ENCODE measurements at regions of chr14 and their contacts with region 1.

Region 1: GRCh38 chr14:85856430-85856829 is 326.5 kb downstream of the FLRT2 start:
- DNase-seq: no peak

Region 2: GRCh38 chr14:85798856-85799255 is 57.6 kb before region 1 on chr14:
- intact Hi-C with region 1: no loop called
- DNase-seq: no peak

Region 3: GRCh38 chr14:85921241-85921640 is 64.8 kb after region 1 on chr14:
- intact Hi-C with region 1: loop called in 1 of 2 experiments (anchors 2 kb)
- DNase-seq: no peak